ENCODE measurements at regions of chrX and their contacts with region 1.

Region 1: GRCh38 chrX:109635176-109635575 is 10.2 kb upstream of the KCNE5 start:
- DNase-seq: peak; percentile 31
- H3K4me3 Mint-ChIP-seq: no peak overlapping the region
- H3K27ac Mint-ChIP-seq: no peak overlapping the region
- H3K4me1 Mint-ChIP-seq: no peaks in the 10 kb centered on the region
- H3K27me3 Mint-ChIP-seq: peaks cover 23% of the 10 kb centered on the region
- CTCF ChIP-seq: no peak

Region 2: GRCh38 chrX:109077788-109078187 is 557.4 kb before region 1 on chrX:
- CTCF ChIA-PET with region 1: no interaction called
- POLR2A ChIA-PET with region 1: no interaction called
- intact Hi-C with region 1: no loop called
- DNase-seq: peak; percentile 0
- H3K4me3 Mint-ChIP-seq: no peak overlapping the region
- H3K27ac Mint-ChIP-seq: no peak overlapping the region
- H3K4me1 Mint-ChIP-seq: no peaks in the 10 kb centered on the region
- H3K27me3 Mint-ChIP-seq: peaks cover 54% of the 10 kb centered on the region
- CTCF ChIP-seq: no peak

Region 3: DNA sequence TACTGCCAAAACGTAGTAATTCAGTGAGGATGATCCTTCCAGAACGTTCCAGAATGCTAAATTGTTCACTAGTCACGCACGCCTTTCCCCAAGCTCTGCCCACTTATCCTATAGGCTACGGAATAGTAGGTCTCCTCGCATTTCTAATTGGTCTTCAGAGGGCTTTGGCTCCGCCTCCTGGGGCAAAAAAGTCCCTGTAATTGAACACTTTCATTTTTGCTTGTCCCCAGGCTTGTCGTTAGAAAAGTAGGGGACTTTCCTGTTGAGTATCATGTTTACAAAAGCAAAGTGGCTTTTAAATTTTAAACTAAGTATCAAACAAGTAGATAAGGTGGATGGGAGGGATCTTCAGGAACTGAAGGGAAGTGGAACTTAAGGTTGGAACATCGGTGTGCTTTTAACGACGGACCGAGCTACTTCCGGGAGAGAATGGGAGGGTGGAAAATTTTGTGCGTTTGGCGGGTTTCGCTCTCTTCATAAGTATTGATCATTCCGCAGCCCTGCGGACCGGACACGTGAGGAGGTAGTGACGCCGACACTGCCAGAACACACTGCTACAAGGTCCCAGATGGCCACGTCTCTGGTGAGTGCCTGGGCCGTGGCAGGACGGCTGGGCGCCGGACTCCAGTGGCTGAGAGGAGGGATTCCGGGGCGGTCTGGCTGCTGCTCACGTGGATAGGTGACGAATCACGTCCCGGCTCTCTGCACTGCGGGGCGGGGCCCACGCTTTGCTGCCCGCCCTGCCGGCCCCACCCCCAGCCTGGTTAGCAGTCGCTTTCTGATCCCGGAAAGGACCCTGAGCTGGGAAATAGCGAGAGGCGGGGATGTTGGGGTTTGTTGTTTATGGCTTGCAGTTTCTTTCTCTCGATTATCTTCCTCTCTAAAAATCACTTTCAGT is 98.5 kb before region 1 on chrX and contains the start of gene NXT2:
- CTCF ChIA-PET with region 1: interaction called, 3 read pairs
- POLR2A ChIA-PET with region 1: interaction called, 4 read pairs
- intact Hi-C with region 1: loop called (anchors 5 kb)
- DNase-seq: peak; percentile 86
- H3K4me3 Mint-ChIP-seq: peak within 1 kb of the TSS; percentile 96
- H3K27ac Mint-ChIP-seq: peak within 1 kb of the TSS; percentile 95
- H3K4me1 Mint-ChIP-seq: peaks cover 13% of the 10 kb centered on the region
- H3K27me3 Mint-ChIP-seq: peaks cover 36% of the 10 kb centered on the region
- CTCF ChIP-seq: no peak
- total RNA-seq, gene NXT2: 6.9 and 9.6 TPM in 2 replicates

Measured in MCF 10A (cell line).